GM10248 (cell line): ENCODE measurements at regions of chr3 and their contacts with region 1.

Region 1: DNA sequence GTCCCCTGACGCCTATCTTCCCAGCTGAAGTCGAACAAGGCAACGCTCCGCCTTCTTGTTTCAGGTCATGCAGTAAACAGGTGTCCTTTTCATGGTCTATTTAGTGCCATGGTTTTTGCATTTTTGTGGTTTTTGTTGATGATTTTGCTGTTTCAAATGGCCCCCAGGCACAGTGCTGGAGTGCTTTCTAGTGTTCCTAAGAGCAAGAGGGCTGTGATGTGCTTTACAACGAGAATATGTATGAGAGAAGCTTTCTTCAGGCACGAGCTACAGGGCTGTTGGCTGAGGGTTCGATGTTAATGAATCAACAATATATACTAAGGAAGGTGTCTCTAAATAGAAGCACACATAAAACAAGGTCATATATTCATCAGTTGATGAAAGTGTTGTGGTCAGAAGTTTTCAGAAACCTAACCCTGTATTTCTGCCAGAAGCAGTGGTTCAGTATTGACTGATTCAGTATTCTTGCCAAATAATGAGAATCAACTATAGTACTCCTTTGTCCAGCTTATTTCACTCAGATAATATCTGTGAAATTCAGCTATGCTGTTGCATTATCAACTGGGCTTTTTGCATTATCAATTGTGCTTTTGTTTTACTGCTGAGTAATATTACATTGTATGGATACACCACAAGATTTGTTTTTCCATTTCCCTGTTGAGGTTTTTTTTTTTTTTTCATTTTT is 18.5 kb downstream of the LIMD1 start:
- DNase-seq: peak; percentile 45
- CTCF ChIP-seq: no peak

Region 2: DNA sequence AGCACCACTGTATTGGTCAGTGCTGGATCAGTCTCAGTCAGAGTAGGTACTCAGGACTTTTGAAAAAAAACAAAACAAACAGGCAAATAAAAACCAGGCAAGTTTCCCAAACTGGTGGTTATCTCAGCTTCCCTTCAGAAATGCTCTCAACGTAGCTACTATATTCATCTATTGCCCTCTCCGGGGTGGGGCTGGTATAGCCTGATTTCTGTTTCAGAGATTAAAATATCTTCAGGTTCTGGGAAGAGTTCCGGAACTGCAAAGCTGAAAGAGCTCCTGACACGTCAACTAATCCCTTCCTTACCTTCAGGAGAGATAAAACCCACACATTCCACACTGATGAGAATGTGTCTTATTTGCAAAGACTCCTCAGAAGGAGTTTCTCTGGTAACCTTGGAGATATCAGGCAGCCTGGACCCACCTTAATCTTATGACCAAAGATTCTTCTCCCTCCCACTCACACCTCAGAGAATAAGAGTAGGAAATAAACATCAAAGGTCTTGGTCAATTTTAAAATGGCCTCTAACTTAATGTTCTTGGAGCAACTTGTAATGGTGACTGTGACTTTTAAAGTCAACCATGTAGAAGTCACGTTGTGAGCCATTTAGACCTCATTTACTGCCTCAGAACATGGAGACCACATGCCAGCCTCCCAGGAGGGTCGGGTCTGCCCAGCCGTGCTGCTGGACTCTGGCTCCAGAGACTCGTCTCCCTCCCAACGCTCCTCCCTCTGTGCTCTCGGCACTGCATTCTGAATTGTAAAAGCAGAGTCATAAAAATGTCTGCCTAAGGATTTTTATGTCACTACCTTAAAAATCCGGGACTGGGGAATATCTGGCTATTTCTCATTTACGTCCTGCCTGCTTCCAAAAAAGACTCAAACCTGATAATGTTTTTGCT is 520.7 kb before region 1 on chr3:
- CTCF ChIA-PET with region 1: no interaction called
- POLR2A ChIA-PET with region 1: no interaction called
- DNase-seq: no peak
- CTCF ChIP-seq: no peak

Region 3: GRCh38 chr3:45593708-45594609 is 19.1 kb before region 1 on chr3:
- CTCF ChIA-PET with region 1: interaction called, 18 read pairs
- POLR2A ChIA-PET with region 1: interaction called, 7 read pairs
- DNase-seq: peak; percentile 89
- CTCF ChIP-seq: no peak

Region 4: DNA sequence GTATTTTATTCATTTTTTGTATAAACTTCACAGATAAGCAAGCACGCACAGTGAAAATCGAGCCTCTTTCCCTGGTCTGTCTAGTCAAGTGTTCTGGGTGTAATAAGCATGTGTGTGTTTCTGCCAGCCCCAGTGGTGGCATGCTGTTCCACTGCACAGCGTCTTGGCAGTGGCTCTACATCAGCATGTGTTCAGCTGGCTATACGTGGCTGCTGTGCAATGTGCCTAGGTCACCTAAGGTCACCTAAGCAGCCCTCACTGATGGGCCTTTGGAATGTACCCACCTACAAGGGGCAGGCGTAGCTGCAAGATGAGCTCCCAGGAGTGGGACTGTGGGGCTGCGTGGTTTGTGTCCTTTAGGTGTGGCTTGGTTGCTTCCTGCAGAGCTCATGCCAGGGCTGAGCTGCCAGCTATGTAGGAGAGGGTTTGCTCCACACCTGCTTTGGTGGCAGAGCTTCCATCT is 13.6 kb before region 1 on chr3:
- CTCF ChIA-PET with region 1: interaction called, 18 read pairs
- POLR2A ChIA-PET with region 1: interaction called, 7 read pairs
- DNase-seq: no peak
- CTCF ChIP-seq: no peak

Region 5: DNA sequence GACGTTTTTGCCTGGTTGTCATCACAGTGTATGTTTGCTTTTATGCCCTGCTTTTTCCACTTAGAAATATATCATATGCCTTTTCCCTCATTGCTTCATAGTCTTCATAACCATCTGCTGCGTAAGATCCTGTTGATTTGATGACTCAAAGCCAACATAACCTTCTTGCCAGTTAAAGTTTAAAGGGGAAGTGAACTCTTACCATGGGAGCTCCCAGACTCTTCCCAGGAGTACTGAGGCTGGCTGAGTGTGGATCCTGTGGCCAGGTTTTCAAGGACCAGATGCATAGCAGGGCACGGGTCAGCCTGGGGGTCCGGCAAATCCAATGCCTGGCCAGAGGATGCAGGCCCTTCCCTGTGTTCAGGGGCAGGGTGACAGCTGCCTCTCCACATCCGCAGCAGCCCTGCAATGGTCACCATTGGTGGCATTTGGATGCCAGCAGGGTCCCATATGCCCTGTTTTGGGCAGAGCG is 34.1 kb after region 1 on chr3:
- CTCF ChIA-PET with region 1: no interaction called
- POLR2A ChIA-PET with region 1: no interaction called
- DNase-seq: no peak
- CTCF ChIP-seq: no peak